GM12878 (cell line): ENCODE measurements at regions of chr20 and their contacts with region 1.

Region 1: DNA sequence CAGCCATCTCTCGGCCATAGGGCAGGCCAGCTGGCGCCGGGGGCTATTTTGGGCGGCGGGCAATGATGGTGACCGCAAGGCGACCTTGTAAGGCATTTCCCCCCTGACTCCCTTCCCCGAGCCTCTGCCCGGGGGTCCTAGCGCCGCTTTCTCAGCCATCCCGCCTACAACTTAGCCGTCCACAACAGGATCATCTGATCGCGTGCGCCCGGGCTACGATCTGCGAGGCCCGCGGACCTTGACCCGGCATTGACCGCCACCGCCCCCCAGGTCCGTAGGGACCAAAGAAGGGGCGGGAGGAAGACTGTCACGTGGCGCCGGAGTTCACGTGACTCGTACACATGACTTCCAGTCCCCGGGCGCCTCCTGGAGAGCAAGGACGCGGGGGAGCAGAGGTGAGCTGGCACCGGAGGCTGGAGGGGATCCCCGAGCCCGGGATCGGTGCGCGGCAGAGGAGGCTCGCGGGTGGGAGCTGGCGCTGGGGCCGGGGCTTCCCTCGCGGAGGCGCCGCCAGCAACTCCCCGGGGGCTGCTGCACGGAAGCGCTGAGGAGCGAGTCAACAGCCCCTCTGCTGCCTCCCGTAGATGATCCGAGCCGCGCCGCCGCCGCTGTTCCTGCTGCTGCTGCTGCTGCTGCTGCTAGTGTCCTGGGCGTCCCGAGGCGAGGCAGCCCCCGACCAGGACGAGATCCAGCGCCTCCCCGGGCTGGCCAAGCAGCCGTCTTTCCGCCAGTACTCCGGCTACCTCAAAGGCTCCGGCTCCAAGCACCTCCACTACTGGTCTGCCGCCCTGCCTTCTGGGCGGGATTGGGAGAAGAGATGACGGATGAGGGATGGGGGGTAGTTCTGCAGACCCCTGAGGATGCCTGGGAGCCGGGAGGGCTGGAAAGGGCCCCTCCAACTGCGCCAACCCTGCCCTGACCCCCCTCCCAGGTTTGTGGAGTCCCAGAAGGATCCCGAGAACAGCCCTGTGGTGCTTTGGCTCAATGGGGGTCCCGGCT is at the starts of genes CTSA and NEURL2:
- DNase-seq: peak; percentile 51
- ATAC-seq: peak; percentile 87
- H3K4me3 ChIP-seq: peak within 1 kb of the TSS; percentile 83
- H3K27ac ChIP-seq: peak within 1 kb of the TSS; percentile 75
- H3K4me1 ChIP-seq: peaks cover 22% of the 10 kb centered on the region
- H3K27me3 ChIP-seq: no peaks in the 10 kb centered on the region
- CTCF ChIP-seq: peak in 1 of 3 experiments; percentile 26; a peak in 1 of 6 replicates
- EP300 ChIP-seq: peak; percentile 43 to 62; a peak in 2 of 4 replicates
- POLR2A ChIP-seq: peak; percentile 88
- RAD21 ChIP-seq: 0 out of 2 replicates have a peak, but pooled peaks have one; percentile 9
- polyA plus RNA-seq, gene CTSA: 7.1 to 8.6 TPM
- polyA plus RNA-seq, gene NEURL2: 0.97 to 1.8 TPM

Region 2: GRCh38 chr20:45779011-45779915 is 112.0 kb before region 1 on chr20:
- CTCF ChIA-PET with region 1: no interaction called
- POLR2A ChIA-PET with region 1: no interaction called
- RAD21 ChIA-PET with region 1: no interaction called
- SMC1A ChIA-PET with region 1: no interaction called
- in situ Hi-C with region 1: no loop called
- intact Hi-C with region 1: no loop called
- DNase-seq: no peak
- ATAC-seq: no peak
- H3K4me3 ChIP-seq: no peak overlapping the region
- H3K27ac ChIP-seq: no peak overlapping the region
- H3K4me1 ChIP-seq: no peaks in the 10 kb centered on the region
- H3K27me3 ChIP-seq: no peaks in the 10 kb centered on the region
- CTCF ChIP-seq: no peak
- EP300 ChIP-seq: no peak
- POLR2A ChIP-seq: no peak
- RAD21 ChIP-seq: no peak

Region 3: GRCh38 chr20:45880988-45881788 is 10.1 kb before region 1 on chr20 and contains the start of gene ZSWIM1:
- CTCF ChIA-PET with region 1: interaction called, 38 read pairs
- POLR2A ChIA-PET with region 1: interaction called, 16 read pairs
- RAD21 ChIA-PET with region 1: interaction called, 25 read pairs
- SMC1A ChIA-PET with region 1: interaction called, 6 read pairs
- in situ Hi-C with region 1: no loop called
- intact Hi-C with region 1: no loop called
- DNase-seq: peak; percentile 99
- ATAC-seq: peak; percentile 100
- H3K4me3 ChIP-seq: peak within 1 kb of the TSS; percentile 84
- H3K27ac ChIP-seq: peak within 1 kb of the TSS; percentile 73
- H3K4me1 ChIP-seq: peaks cover 12% of the 10 kb centered on the region
- H3K27me3 ChIP-seq: no peaks in the 10 kb centered on the region
- CTCF ChIP-seq: no peak
- EP300 ChIP-seq: no peak
- POLR2A ChIP-seq: peak; percentile 98
- RAD21 ChIP-seq: no peak
- polyA plus RNA-seq, gene ZSWIM1: 2.4 to 2.5 TPM

Region 4: DNA sequence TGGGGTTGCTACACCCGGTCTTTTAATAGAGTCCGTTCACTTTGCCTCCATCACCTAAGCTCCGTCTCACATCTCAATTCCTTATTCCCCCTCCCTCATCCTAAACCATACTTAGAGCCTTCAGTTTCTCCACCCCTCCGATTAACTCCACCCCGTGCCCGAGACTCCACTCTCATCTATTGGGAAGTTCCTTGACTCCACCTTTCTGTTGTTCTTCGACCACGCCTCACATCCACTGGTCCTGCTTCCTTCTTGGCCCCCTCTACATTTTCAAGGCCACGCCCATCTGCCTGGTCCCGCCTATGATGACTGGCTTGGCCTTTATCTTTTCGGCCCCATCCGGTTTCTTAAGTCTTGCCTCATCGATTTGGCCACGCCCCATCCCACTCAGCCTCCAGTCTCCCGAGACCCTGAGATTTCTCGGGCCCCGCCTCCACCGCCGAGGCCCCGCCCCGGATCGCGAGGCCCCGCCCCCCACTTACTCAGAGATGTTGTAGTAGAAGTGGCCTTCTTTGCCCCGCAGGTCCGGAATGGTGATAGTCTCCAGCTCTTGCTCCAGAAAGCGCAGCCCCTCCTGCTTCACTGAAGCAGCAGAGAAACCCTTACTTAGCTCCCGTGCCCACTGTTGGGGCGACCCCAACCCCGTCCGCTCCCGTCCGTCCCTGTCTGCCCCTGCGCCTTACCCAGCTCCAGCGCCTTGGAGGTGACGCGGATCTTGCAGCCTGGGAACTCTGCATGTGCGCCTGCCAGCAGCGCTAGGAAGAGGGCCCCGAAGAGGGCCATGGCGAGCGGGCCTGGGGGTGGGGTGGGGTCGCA is 19.6 kb after region 1 on chr20:
- CTCF ChIA-PET with region 1: interaction called, 8 read pairs
- POLR2A ChIA-PET with region 1: interaction called, 4 read pairs
- RAD21 ChIA-PET with region 1: interaction called, 13 read pairs
- SMC1A ChIA-PET with region 1: interaction called, 12 read pairs
- in situ Hi-C with region 1: no loop called
- intact Hi-C with region 1: loop called (anchors 1 kb)
- DNase-seq: peak; percentile 99
- ATAC-seq: peak; percentile 96
- H3K4me3 ChIP-seq: peak overlapping the region; percentile 77
- H3K27ac ChIP-seq: peak overlapping the region; percentile 61; the same call in 1 of the 2 replicates
- H3K4me1 ChIP-seq: peaks cover 15% of the 10 kb centered on the region
- H3K27me3 ChIP-seq: no peaks in the 10 kb centered on the region
- CTCF ChIP-seq: no peak
- EP300 ChIP-seq: no peak
- POLR2A ChIP-seq: peak; percentile 77
- RAD21 ChIP-seq: no peak